Caco-2 (cell line): ENCODE measurements at regions of chr7 and their contacts with region 1.

Region 1: DNA sequence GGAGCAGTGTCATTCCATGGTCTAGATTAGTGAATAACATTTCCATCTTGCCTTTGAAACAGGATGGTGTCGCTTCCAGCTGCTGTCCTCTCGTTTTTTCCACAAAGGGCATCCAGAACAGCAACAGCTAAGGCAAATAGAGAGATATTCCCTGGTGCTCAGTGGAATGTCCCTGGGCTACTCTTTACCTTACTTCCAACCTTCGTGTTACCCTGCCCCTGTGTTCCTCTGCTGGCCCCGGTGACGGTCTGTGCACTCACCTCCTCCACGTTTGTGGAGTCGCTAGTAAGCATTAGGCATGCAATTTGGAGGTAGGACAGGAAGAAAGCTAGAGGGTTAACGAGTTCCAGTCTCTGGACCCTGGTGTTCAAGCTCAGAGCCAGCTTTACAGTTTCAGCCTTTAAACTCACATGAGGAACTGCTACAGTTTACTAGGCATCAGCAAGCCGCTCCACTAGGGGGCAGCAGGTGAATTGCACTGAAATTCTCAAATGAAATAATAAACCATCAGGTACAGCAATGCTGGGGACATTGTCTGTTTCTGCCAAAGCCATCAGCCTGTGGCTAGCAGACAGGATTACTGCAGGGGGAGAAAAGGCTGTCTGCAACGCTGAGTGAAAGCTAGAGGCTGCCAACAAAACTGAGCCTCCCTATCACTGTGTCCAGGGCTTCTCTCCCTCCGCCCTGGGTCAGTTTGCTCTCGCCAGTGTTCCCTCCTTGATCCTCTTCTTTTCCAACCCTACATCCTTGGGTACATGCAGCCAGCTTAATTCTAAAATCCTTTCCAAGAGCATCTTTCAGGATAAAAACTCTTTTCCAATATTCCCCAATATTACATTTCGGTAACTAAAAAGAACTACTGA is 9.0 kb downstream of the MRPL32 start:
- DNase-seq: peak; percentile 74 to 78
- H3K4me3 ChIP-seq: no peak overlapping the region
- H3K4me3 Mint-ChIP-seq: no peak overlapping the region
- H3K27ac Mint-ChIP-seq: no peak overlapping the region
- H3K4me1 ChIP-seq: no peaks in the 10 kb centered on the region
- H3K4me1 Mint-ChIP-seq: no peaks in the 10 kb centered on the region
- H3K27me3 ChIP-seq: no peaks in the 10 kb centered on the region
- H3K27me3 Mint-ChIP-seq: no peaks in the 10 kb centered on the region
- CTCF ChIP-seq: peak; percentile 86 to 91

Region 2: DNA sequence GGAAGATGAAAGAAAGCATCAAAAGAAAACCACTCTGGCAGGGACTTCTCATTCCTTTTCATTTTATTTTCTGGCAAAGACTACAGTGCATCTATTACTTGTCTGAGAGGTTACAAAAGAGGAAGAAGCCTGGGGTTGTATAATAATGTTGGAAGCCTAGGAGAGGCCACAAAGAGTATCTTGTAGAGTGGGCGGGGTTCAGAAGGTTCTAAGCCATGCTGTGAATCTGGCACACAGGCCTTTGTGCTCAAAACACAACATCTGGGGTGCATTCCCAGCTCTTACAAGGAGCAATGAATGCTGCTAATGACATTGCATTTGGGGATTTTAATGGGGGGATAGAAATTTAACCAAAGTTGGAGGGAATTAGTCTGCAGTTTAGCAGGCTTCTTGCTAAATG is 40.4 kb after region 1 on chr7:
- CTCF ChIA-PET with region 1: no interaction called
- POLR2A ChIA-PET with region 1: no interaction called
- intact Hi-C with region 1: no loop called
- DNase-seq: no peak
- H3K4me3 ChIP-seq: no peak overlapping the region
- H3K4me3 Mint-ChIP-seq: no peak overlapping the region
- H3K27ac Mint-ChIP-seq: no peak overlapping the region
- H3K4me1 ChIP-seq: no peaks in the 10 kb centered on the region
- H3K4me1 Mint-ChIP-seq: no peaks in the 10 kb centered on the region
- H3K27me3 ChIP-seq: no peaks in the 10 kb centered on the region
- H3K27me3 Mint-ChIP-seq: peaks cover 13% of the 10 kb centered on the region
- CTCF ChIP-seq: no peak

Region 3: DNA sequence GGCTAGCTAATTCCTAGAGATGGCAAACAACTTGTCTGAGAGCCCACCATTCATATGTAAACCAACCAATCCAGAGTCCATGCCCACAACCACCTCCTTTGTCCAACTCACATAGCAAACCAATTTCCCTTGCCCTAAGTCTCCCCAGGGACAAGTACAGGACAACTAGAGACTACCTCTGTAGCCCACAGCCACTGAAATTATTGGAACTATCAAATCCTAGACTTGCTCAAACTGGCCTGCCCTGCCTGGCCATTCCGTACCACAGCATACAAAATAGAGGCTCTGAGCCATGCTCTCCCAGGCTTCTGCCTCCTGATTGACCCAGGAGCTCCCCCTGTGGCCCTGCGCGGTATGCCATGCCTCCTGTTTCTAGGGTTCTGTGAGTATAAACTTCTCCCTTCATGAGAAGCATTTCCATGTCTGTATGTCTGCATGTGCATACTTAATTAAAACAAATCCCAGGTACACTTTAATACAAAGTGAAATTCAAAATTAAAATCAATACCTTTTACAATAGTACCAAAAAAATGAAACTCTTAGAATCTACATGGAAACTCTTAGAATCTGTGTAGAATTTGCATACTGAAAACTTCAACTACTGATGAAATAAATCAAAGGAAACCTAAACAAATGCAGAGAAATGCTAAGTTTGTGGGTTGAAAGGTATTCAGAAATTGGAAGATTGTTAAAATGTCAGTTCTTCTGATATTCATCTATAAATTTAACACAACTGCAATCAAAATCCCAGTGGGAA is 167.2 kb after region 1 on chr7:
- CTCF ChIA-PET with region 1: interaction called, 9 read pairs
- POLR2A ChIA-PET with region 1: no interaction called
- intact Hi-C with region 1: loop called (anchors 1 kb)
- DNase-seq: peak; percentile 71 to 83
- H3K4me3 ChIP-seq: no peak overlapping the region
- H3K4me3 Mint-ChIP-seq: no peak overlapping the region
- H3K27ac Mint-ChIP-seq: no peak overlapping the region
- H3K4me1 ChIP-seq: no peaks in the 10 kb centered on the region
- H3K4me1 Mint-ChIP-seq: no peaks in the 10 kb centered on the region
- H3K27me3 ChIP-seq: no peaks in the 10 kb centered on the region
- H3K27me3 Mint-ChIP-seq: peaks cover 9% of the 10 kb centered on the region
- CTCF ChIP-seq: peak; percentile 77 to 93